ENCODE measurements at regions of chr1 and their contacts with region 1.

Region 1: DNA sequence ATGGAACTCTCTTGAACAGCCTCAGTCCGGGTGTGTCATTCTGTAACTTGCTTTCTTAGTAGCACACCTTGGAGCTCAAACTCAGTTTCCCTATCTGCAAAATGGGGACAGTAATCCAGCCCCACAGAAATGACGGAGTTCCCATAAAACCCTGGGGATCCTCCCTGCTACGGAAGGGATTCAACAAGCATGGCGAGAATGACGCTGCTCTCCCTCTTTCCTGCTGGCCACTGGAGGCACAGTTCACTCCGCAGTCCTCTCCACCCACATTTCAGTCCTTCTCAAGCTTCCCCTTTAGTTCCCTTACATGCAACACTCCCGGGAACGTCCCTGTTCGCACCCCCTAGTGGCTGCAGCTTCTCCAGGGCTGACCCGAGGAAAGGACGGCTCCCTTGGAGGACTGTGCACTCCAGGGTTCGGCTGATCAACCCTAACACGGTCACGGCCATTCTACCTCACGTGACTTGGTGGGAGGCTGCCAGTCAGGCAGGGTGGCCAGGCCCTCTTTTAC is 20.6 kb downstream of the RUNX3 start:
- DNase-seq: peak; percentile 73 to 80
- ATAC-seq: peak; percentile 78 to 96
- H3K4me3 ChIP-seq: no peak overlapping the region
- H3K27ac ChIP-seq: no peak overlapping the region
- H3K4me1 ChIP-seq: no peaks in the 10 kb centered on the region; the same call in 2 of the 3 replicates
- CTCF ChIP-seq: peak; percentile 30
- EP300 ChIP-seq: no peak
- POLR2A ChIP-seq: no peak
- RAD21 ChIP-seq: peak in 1 of 2 experiments; percentile 34; a peak in 2 of 5 replicates

Region 2: DNA sequence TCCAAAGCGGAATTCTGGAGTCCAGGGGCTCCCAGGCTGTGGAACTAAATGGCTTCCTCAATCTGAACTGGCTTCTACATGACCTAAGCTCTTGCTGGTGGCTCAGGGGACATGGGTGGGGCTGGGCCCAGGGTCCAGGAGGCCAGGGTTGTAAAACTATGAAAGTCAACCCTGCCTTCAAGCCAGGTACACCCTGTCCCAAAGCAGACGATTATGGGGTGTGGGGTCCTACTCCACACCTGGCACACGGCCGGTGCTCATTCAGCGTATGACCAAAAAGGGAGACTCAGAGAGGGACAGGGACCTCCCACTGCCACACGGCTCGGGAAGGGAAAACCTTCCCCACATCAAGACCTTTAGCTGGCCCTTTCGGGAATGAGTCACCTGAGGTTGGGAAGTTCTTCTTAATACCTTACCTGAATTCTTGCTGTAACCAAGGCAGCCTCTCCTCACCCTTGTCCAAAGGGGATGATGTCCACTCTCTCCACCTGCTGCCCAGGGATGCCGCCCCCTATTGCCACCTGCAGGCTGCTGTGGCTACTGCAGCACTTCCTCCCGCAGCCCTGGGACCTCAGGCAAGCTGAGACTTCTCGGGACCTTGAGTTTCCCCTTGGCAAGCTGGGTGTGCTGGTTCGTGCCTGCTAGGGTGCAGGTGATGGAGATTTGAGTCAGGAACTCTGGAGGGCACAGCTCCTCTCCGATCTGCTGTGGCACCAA is 11.5 kb before region 1 on chr1:
- CTCF ChIA-PET with region 1: interaction called, 16 read pairs
- POLR2A ChIA-PET with region 1: no interaction called
- DNase-seq: peak; percentile 39 to 69
- ATAC-seq: peak; percentile 84 to 93; a peak in 5 of 6 replicates
- H3K4me3 ChIP-seq: no peak overlapping the region
- H3K27ac ChIP-seq: no peak overlapping the region
- H3K4me1 ChIP-seq: no peaks in the 10 kb centered on the region
- CTCF ChIP-seq: peak; percentile 50
- EP300 ChIP-seq: no peak
- POLR2A ChIP-seq: no peak
- RAD21 ChIP-seq: peak in 1 of 2 experiments; percentile 51; a peak in 4 of 5 replicates